Activated T-helper 1 cell treated with anti-CD3 and anti-CD28 coated beads, Interleukin-12 subunit alpha, Interleukin-12 subunit beta, Interleukin-2, Interleukin-4 antibody, amounts not matched to agents 30 ng/mL and 10 ng/mL and 1 ng/mL, durations not matched to agents 14 hours and 24 hours and 36 hours (primary cell): ENCODE measurements at regions of chr6 and their contacts with region 1.

Region 1: GRCh38 chr6:139323511-139324300 is 31.9 kb upstream of the TXLNB start:
- DNase-seq: peak; percentile 70
- H3K4me3 Mint-ChIP-seq: peak overlapping the region; percentile 63
- H3K27ac Mint-ChIP-seq: peak overlapping the region; percentile 90
- H3K4me1 Mint-ChIP-seq: peaks cover 43% of the 10 kb centered on the region
- H3K27me3 Mint-ChIP-seq: no peaks in the 10 kb centered on the region

Region 2: DNA sequence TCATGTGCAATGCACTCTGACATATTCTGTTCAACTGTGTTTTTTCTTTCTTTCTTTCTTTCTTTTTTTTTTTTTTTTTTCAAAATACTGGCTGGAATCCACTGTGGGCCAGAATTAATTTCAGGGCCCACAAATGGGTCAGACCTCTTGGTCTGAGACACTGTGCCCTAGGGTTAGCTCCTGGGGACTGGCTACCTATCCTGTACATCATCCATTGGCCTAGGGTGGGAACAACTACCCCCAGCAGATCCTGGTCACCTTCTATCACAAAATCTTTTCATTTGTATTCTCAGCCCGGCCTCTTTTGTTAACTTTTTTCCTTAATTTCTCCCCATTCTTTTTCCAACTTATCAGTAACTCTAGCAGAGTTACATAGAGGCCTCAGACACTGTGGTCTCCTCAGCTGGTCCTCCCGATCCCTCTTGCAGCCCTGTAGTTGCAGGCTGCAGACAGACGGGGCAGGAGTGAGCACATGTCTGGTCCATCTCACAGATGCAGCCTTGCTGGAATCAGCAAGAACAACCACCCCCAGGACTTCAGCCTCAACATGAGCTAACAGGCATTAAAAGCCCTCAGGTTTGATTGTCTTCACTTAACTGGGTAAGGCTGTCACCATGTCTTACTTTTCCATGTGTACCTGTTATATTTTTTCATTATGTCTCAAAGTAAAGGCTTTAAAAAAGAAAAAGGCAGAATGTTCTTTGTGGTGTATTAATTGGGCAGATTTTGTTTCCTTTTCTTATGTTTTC is 73.2 kb before region 1 on chr6:
- intact Hi-C with region 1: loop called (anchors 1 kb)
- DNase-seq: peak; percentile 43
- H3K4me3 Mint-ChIP-seq: peak overlapping the region; percentile 43
- H3K27ac Mint-ChIP-seq: peak overlapping the region; percentile 91
- H3K4me1 Mint-ChIP-seq: peaks cover 45% of the 10 kb centered on the region
- H3K27me3 Mint-ChIP-seq: no peaks in the 10 kb centered on the region

Region 3: DNA sequence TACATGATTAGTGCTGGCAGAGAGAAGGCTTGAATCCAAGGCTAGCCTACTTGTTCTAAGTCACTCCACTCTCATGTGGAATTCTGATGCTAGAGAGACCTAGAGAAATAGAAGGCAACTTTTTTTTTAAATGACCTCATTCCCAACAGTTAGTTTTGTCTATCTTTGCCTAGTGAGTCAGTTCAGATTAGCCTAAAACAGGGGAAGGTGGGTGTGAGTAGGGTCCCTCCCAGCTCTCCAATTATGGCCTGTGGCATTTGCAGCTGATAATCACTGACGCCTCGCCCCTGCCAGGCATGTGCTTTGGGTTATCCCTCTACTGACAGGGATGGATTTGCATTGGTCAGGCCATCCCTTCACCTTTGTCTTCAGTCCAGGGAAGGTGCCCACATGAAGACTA is 45.5 kb before region 1 on chr6:
- intact Hi-C with region 1: loop called (anchors 5 kb)
- DNase-seq: no peak
- H3K4me3 Mint-ChIP-seq: no peak overlapping the region
- H3K27ac Mint-ChIP-seq: no peak overlapping the region
- H3K4me1 Mint-ChIP-seq: peaks cover 32% of the 10 kb centered on the region
- H3K27me3 Mint-ChIP-seq: no peaks in the 10 kb centered on the region

Region 4: GRCh38 chr6:139308286-139308916 is 15.3 kb before region 1 on chr6:
- intact Hi-C with region 1: loop called (anchors 1 kb)
- DNase-seq: no peak
- H3K4me3 Mint-ChIP-seq: no peak overlapping the region
- H3K27ac Mint-ChIP-seq: peak overlapping the region; percentile 78
- H3K4me1 Mint-ChIP-seq: peaks cover 32% of the 10 kb centered on the region
- H3K27me3 Mint-ChIP-seq: peaks cover 6% of the 10 kb centered on the region

Region 5: DNA sequence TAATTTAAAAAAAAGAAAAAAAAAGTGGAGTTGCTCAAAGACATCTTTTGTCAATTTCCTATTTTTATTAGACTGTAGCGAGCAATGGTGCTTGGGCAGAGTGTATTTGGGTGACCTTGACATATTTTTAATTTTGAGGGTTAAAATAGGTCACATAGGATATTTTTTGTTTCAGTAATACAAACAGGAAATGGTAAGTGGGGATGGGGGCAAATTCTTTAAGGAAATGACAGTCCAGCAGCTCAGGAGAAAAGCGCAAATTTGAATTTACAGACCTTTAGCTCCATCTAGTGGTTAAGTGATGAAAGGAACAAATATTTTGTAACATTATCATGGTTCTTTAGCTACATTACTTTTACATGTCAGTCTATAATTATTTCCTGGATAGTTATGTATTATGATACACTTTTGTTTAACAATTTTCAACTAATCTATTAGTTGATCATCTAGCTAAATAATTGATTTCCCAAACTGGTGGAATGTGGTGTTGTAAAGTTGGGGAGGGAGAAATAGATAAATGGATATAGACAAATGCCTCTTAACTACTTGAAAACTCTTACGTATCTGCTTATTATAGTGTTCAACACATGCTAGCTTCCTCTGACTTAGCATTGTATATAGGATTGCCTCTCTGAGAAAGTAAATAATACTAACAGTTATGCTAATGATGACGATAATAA is 40.7 kb after region 1 on chr6:
- intact Hi-C with region 1: loop called (anchors 2 kb)
- DNase-seq: no peak
- H3K4me3 Mint-ChIP-seq: no peak overlapping the region
- H3K27ac Mint-ChIP-seq: no peak overlapping the region
- H3K4me1 Mint-ChIP-seq: peaks cover 47% of the 10 kb centered on the region
- H3K27me3 Mint-ChIP-seq: peaks cover 4% of the 10 kb centered on the region